ENCODE measurements at regions of chr13 and their contacts with region 1.

Region 1: DNA sequence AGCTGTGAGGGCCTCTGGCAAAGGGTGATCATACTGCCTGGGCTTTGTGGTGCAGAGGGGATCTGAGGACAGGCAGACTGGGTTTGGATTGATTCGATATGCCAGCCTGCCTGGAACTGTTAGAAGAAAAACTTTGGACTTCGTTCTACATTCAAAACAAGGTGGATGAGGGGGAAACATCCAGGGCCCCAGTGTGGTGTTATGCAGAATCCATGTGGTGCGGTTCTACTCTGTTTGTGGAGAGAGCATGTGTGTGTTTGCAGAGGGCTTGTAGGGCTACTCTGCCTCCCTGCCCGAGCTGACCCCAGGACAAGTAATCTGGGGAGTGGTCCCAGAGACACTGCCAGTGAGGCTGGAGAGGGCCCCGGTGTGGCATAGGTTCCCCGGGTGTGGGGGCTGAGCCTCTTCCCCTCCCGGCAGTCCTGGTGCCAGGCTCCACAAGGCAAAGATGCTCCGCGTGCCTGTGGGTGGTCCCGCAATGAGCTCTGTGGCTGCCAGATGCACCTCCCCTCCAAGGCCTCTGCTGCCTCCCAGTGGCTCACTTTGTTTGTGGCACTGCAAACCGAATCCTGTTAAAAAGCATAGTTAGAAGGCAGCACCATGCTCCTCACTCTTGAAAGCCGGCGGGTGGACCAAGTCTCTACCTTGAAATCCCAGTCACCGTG is 22.3 kb upstream of the TFDP1 start:
- DNase-seq: peak; percentile 65
- ATAC-seq: peak; percentile 81
- H3K4me3 ChIP-seq: peak overlapping the region; percentile 20 to 67 (median 28)
- H3K27ac ChIP-seq: peak overlapping the region; percentile 34
- H3K4me1 ChIP-seq: peaks cover 27% of the 10 kb centered on the region
- H3K27me3 ChIP-seq: no peaks in the 10 kb centered on the region
- CTCF ChIP-seq: peak; percentile 95
- EP300 ChIP-seq: no peak
- POLR2A ChIP-seq: no peak
- RAD21 ChIP-seq: peak; percentile 85

Region 2: GRCh38 chr13:111792956-111793355 is 1769.3 kb before region 1 on chr13:
- CTCF ChIA-PET with region 1: no interaction called
- POLR2A ChIA-PET with region 1: no interaction called
- in situ Hi-C with region 1: no loop called
- intact Hi-C with region 1: no loop called
- DNase-seq: no peak
- ATAC-seq: no peak
- H3K4me3 ChIP-seq: no peak overlapping the region
- H3K27ac ChIP-seq: no peak overlapping the region
- H3K4me1 ChIP-seq: no peaks in the 10 kb centered on the region
- H3K27me3 ChIP-seq: peaks cover 0 to 10% of the 10 kb centered on the region in 2 experiments; a peak in 1 of 5 replicates
- CTCF ChIP-seq: no peak
- EP300 ChIP-seq: no peak
- POLR2A ChIP-seq: no peak
- RAD21 ChIP-seq: no peak

Region 3: DNA sequence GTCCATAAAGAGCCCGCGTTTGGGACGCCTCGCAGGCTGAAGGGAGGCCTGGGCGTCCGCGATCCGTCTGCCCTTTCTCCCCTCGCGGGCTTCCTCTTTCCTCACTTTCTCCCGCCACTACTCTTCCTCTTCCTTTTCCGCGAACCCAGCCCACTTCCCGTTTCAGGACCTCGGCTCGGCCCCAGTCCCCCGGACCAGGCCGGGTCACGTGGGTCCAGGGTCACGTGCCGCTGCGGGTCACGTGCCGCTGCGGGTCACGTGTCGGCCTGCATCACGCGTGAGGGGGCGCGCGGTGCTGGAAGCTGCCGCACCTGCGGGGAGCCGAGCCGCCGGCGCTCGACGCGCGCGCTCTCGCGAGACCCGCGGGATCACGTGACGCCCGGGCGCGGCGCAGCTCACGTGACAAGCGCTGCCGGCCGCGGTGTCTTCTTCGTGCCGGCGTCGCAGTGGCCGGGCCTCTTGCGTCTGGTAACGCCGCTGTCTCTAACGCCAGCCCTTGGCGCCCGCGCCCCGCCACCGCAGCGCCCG is 265.3 kb before region 1 on chr13 and contains the start of gene LAMP1:
- CTCF ChIA-PET with region 1: no interaction called
- POLR2A ChIA-PET with region 1: no interaction called
- in situ Hi-C with region 1: no loop called
- intact Hi-C with region 1: no loop called
- DNase-seq: peak; percentile 89
- ATAC-seq: peak; percentile 58
- H3K4me3 ChIP-seq: peak within 1 kb of the TSS; percentile 82 to 90 (median 89)
- H3K27ac ChIP-seq: peak within 1 kb of the TSS; percentile 71
- H3K4me1 ChIP-seq: peaks cover 46% of the 10 kb centered on the region
- H3K27me3 ChIP-seq: no peaks in the 10 kb centered on the region; a peak in 1 of 5 replicates
- CTCF ChIP-seq: peak; percentile 42; the same call in 1 of the 2 replicates
- EP300 ChIP-seq: peak; percentile 78; a peak in 3 of 4 replicates
- POLR2A ChIP-seq: peak; percentile 62 to 63
- RAD21 ChIP-seq: peak; percentile 79
- total RNA-seq, gene LAMP1: 33.2 and 112 TPM in 2 replicates

Region 4: DNA sequence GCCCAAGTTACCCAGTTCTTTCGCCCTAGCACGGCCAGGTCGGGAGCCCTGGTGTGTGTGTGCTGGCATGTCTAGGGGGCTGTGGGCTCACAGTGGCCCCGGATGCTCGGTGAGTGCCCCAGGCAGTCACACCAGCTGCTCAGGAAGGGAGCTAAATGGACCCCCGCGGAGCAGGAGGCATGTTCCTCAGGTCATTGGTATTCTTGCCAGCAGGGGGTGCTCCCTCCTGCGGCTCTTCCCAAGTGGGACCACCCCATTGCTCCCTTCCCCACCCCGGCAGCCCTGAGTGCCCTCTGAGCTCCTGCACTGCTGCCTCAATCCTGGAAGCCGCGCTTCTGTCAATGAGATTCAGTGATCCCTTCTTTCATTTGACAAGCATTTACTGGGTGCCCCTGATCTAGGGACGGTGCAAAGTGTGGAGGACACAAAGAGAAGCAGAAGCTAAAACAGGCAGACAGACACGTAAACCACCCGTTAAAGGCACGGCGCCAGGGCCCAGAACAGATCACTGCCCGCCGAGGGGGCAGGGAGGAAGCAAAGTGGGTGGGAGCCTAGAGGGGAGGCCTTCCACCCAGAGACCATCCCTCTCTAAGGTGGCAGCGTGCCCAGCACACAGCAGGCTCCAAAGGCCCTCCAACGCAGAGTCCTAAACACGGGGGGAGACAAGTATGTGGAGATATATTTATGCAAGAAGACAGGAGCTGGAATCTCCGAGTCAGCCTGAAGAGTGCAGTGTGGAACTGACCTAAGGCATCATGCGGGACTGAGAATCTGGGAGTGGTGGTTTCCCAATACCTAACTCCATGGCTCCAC is 103.8 kb before region 1 on chr13:
- CTCF ChIA-PET with region 1: interaction called, 4 read pairs
- POLR2A ChIA-PET with region 1: interaction called, 4 read pairs
- in situ Hi-C with region 1: loop called (anchors 5 kb)
- intact Hi-C with region 1: loop called (anchors 1 kb)
- DNase-seq: peak; percentile 13
- ATAC-seq: peak; percentile 84
- H3K4me3 ChIP-seq: no peak overlapping the region
- H3K27ac ChIP-seq: no peak overlapping the region
- H3K4me1 ChIP-seq: peaks cover 13% of the 10 kb centered on the region
- H3K27me3 ChIP-seq: no peaks in the 10 kb centered on the region
- CTCF ChIP-seq: peak; percentile 64
- EP300 ChIP-seq: no peak
- POLR2A ChIP-seq: no peak
- RAD21 ChIP-seq: no peak

Region 5: GRCh38 chr13:113490496-113491417 is 71.5 kb before region 1 on chr13 and contains the start of gene DCUN1D2:
- CTCF ChIA-PET with region 1: no interaction called
- POLR2A ChIA-PET with region 1: no interaction called
- in situ Hi-C with region 1: no loop called
- intact Hi-C with region 1: loop called (anchors 5 kb)
- DNase-seq: peak; percentile 84
- ATAC-seq: peak; percentile 86
- H3K4me3 ChIP-seq: peak within 1 kb of the TSS; percentile 83 to 93 (median 89)
- H3K27ac ChIP-seq: peak within 1 kb of the TSS; percentile 79
- H3K4me1 ChIP-seq: peaks cover 71% of the 10 kb centered on the region
- H3K27me3 ChIP-seq: no peaks in the 10 kb centered on the region
- CTCF ChIP-seq: no peak
- EP300 ChIP-seq: no peak
- POLR2A ChIP-seq: peak in 1 of 2 experiments; percentile 44; a peak in 1 of 4 replicates
- RAD21 ChIP-seq: no peak
- total RNA-seq, gene DCUN1D2: 7.4 and 9.6 TPM in 2 replicates

Region 6: GRCh38 chr13:113544071-113544891 is 17.9 kb before region 1 on chr13:
- CTCF ChIA-PET with region 1: no interaction called
- POLR2A ChIA-PET with region 1: no interaction called
- in situ Hi-C with region 1: no loop called
- intact Hi-C with region 1: loop called (anchors 1 kb)
- DNase-seq: peak; percentile 80
- ATAC-seq: peak; percentile 88
- H3K4me3 ChIP-seq: peak overlapping the region in 1 of 3 experiments; percentile 3; a peak in 1 of 6 replicates
- H3K27ac ChIP-seq: peak overlapping the region; percentile 52
- H3K4me1 ChIP-seq: peaks cover 38% of the 10 kb centered on the region
- H3K27me3 ChIP-seq: no peaks in the 10 kb centered on the region
- CTCF ChIP-seq: no peak
- EP300 ChIP-seq: 0 out of 4 replicates have a peak, but pooled peaks of 1 of the 2 experiments have one; percentile 8
- POLR2A ChIP-seq: no peak
- RAD21 ChIP-seq: no peak

Measured in HepG2 (cell line).